ENCODE measurements at regions of chrX and their contacts with region 1.

Region 1: DNA sequence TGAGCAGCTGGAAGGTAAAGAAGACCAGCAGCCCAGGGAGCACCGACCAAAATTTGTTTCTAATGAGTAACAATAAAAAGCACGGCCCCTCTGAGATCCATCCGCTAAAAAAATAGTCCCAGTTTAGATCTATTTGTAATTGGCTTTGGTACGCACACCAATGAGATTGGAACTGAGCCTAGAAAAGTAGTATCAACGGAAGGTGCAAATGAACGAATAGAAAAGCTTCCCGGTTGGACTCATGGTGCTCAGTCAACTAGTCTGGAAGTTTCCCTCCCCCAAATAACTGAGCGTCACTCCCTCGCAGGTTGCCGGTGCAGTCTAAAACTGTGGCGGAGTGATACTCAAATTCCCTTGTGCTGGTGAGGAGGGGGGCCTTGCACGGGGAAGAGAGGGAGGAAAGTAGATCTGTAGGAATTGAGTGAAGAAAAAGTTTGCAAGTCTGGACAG is at the start of gene COL4A5:
- DNase-seq: peak; percentile 90
- H3K4me3 Mint-ChIP-seq: peak within 1 kb of the TSS; percentile 88
- H3K27ac Mint-ChIP-seq: peak within 1 kb of the TSS; percentile 91
- H3K4me1 Mint-ChIP-seq: no peaks in the 10 kb centered on the region
- H3K27me3 Mint-ChIP-seq: peaks cover 40% of the 10 kb centered on the region
- CTCF ChIP-seq: no peak
- total RNA-seq, gene COL4A5: 122 and 138 TPM in 2 replicates

Region 2: DNA sequence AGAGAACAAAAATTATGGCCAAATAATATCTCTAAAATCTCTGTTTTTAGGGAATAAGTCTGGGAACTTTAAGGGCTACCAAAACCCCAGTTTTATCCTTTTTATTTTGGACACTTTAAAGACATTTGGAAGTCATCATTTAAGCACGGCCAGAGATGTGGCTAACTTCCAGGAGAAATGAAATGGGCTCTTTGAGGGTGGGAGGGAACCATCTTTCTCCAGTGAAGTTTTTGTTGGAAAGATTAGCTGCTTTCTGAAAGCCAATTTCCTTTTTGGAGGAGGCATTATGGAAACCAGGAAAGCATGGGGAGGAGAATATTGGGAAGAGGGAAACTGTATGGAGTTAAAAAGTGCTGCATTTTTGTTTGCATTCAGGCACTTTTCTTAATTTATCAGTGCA is 389.8 kb before region 1 on chrX:
- CTCF ChIA-PET with region 1: no interaction called
- POLR2A ChIA-PET with region 1: no interaction called
- intact Hi-C with region 1: no loop called
- DNase-seq: no peak
- H3K4me3 Mint-ChIP-seq: no peak overlapping the region
- H3K27ac Mint-ChIP-seq: no peak overlapping the region
- H3K4me1 Mint-ChIP-seq: no peaks in the 10 kb centered on the region
- H3K27me3 Mint-ChIP-seq: peaks cover 66% of the 10 kb centered on the region
- CTCF ChIP-seq: no peak

Region 3: DNA sequence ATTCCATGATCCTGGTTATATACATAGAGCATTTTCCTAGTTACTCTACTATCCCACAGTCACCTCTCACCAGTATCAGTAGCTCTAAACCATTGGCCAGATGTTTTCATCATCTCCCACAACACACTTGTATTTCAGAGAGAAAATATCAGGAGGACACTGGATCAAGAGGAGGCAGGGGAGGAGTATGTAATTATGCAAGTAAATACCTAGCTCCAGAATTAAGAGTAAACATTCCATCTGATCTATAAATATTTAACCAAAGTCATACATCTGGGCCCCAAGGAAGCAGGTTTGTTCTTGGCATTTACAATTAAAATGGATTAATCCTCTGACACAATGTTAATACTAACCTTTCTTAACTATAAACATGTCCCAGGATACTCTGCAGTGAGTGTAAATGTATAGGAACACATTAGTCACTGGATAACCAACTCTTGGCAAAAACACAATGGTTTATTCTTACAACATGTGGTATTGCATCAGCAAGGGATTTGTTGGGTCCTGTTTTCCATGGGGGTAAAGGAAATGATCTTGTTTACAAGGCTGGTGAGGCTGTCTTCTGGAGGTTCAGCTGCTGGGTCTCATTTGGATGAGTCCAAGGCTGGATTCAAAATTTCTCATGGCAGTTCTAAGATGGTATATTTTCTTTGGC is 177.8 kb before region 1 on chrX:
- CTCF ChIA-PET with region 1: no interaction called
- POLR2A ChIA-PET with region 1: interaction called, 33 read pairs
- intact Hi-C with region 1: no loop called
- DNase-seq: peak; percentile 92
- H3K4me3 Mint-ChIP-seq: no peak overlapping the region
- H3K27ac Mint-ChIP-seq: peak overlapping the region; percentile 81
- H3K4me1 Mint-ChIP-seq: peaks cover 25% of the 10 kb centered on the region
- H3K27me3 Mint-ChIP-seq: peaks cover 47% of the 10 kb centered on the region
- CTCF ChIP-seq: no peak

Region 4: DNA sequence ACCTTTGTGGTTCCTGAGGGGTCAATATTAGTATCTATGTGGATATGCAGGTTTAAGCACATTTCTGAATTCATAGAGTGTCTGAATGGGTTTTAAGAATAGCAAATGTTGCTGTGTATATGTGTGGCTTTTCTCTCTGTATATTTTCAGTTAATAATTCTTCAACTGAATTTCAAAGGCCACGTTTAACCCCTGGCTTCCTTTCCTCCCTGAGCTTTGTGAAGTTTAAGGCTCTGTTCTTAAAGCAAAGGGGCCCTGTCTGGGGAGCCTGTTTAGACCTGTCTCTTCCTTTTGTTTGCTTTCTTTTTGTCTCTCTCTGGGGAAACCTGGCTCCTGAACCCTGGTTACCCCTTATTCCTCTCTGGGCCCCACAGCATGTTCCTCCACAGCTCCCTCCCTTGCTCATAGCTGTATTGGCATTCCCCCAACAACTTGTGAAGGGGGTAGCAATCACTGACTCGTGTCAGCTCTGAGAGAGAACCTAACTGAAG is 140.3 kb before region 1 on chrX:
- CTCF ChIA-PET with region 1: no interaction called
- POLR2A ChIA-PET with region 1: interaction called, 15 read pairs
- intact Hi-C with region 1: no loop called
- DNase-seq: peak; percentile 55
- H3K4me3 Mint-ChIP-seq: no peak overlapping the region
- H3K27ac Mint-ChIP-seq: peak overlapping the region; percentile 82
- H3K4me1 Mint-ChIP-seq: peaks cover 5% of the 10 kb centered on the region
- H3K27me3 Mint-ChIP-seq: peaks cover 61% of the 10 kb centered on the region
- CTCF ChIP-seq: no peak

Region 5: GRCh38 chrX:108399427-108400162 is 39.9 kb before region 1 on chrX:
- CTCF ChIA-PET with region 1: interaction called, 3 read pairs
- POLR2A ChIA-PET with region 1: interaction called, 152 read pairs
- intact Hi-C with region 1: loop called (anchors 2 kb)
- DNase-seq: peak; percentile 90
- H3K4me3 Mint-ChIP-seq: peak overlapping the region; percentile 57
- H3K27ac Mint-ChIP-seq: peak overlapping the region; percentile 82
- H3K4me1 Mint-ChIP-seq: peaks cover 65% of the 10 kb centered on the region
- H3K27me3 Mint-ChIP-seq: peaks cover 21% of the 10 kb centered on the region
- CTCF ChIP-seq: no peak

Region 6: DNA sequence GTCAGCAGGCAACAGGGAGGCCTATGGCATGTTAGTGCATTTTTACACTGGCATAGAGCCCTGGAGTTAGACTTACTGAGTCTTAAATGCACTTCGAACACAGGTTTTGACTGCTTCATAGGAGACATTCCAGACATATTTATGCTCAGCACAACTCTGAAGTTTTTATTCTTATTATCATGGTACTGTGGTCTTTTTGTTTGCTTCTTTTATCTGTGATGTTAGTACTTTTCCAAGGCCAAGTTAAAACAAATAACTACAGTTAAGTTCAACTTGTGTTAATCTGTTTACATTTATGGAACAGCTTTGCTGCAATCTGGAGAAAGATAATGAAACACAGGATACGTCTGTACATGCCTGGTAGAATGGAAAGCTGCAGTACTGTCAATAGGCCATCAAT is 76.7 kb after region 1 on chrX:
- CTCF ChIA-PET with region 1: no interaction called
- POLR2A ChIA-PET with region 1: interaction called, 17 read pairs
- intact Hi-C with region 1: no loop called
- DNase-seq: no peak
- H3K4me3 Mint-ChIP-seq: peak overlapping the region; percentile 41
- H3K27ac Mint-ChIP-seq: peak overlapping the region; percentile 91
- H3K4me1 Mint-ChIP-seq: no peaks in the 10 kb centered on the region
- H3K27me3 Mint-ChIP-seq: peaks cover 51% of the 10 kb centered on the region
- CTCF ChIP-seq: no peak